GM23248 (cell line): ENCODE measurements at regions of chr9 and their contacts with region 1.

Region 1: GRCh38 chr9:109590945-109591344 is 92.8 kb upstream of the PTPN3 start:
- DNase-seq: no peak
- H3K4me3 ChIP-seq: no peak overlapping the region
- H3K27ac ChIP-seq: no peak overlapping the region
- H3K4me1 ChIP-seq: no peaks in the 10 kb centered on the region
- H3K27me3 ChIP-seq: peaks cover 32% of the 10 kb centered on the region

Region 2: GRCh38 chr9:108339251-108339650 is 1251.7 kb before region 1 on chr9:
- in situ Hi-C with region 1: no loop called
- DNase-seq: peak; percentile 8
- H3K4me3 ChIP-seq: no peak overlapping the region
- H3K27ac ChIP-seq: no peak overlapping the region
- H3K4me1 ChIP-seq: no peaks in the 10 kb centered on the region
- H3K27me3 ChIP-seq: no peaks in the 10 kb centered on the region

Region 3: DNA sequence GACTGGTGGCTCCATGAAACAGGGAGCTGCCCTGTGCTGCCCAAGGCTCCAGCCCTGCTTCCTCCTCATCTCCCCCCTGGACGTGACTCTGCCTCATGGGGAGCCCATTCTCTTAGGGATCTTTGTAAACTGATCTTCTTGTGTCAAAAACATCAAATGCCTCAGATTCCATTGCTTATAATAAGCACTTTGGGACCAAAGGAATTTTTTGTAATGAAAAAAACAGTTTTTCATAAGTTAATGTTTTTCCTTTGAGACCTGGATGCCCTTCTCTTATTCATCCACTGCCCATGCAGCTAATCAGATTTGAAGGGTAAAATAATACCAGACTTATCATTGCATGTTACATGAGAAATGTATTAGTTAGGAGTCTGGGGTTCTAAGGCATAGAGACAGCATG is 230.8 kb after region 1 on chr9:
- in situ Hi-C with region 1: loop called (anchors 5 kb)
- DNase-seq: no peak
- H3K4me3 ChIP-seq: no peak overlapping the region
- H3K27ac ChIP-seq: no peak overlapping the region
- H3K4me1 ChIP-seq: peaks cover 20% of the 10 kb centered on the region
- H3K27me3 ChIP-seq: no peaks in the 10 kb centered on the region

Region 4: DNA sequence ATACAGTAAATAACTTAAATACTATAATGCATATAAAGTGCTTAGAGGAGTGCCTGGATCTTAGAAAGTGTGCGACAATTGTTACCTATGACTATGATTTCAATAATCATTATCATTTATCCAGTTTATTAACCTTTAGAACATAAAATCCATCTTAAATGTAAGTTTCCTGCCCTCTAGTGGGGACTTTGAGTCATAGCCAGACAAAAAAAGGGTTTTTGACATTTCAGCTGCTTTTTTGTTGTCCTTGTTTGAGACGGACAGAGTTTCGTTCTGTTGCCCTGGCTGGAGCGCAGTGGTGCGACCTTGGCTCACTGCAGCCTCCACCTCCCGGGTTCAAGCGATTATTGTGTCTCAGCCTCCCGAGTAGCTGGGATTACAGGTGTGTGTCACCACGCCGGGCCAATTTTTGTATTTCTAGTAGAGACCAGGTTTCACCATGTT is 626.7 kb after region 1 on chr9:
- in situ Hi-C with region 1: loop called (anchors 25 kb)
- DNase-seq: peak; percentile 66
- H3K4me3 ChIP-seq: no peak overlapping the region
- H3K27ac ChIP-seq: no peak overlapping the region
- H3K4me1 ChIP-seq: no peaks in the 10 kb centered on the region
- H3K27me3 ChIP-seq: no peaks in the 10 kb centered on the region